Activated CD4-positive, alpha-beta T cell treated with anti-CD3 and anti-CD28 coated beads for 36 hours (primary cell): ENCODE measurements at regions of chr2 and their contacts with region 1.

Region 1: GRCh38 chr2:85728883-85729824 is 24.6 kb upstream of the ATOH8 start:
- DNase-seq: peak; percentile 87
- ATAC-seq: peak; percentile 94
- H3K4me3 Mint-ChIP-seq: no peak overlapping the region
- H3K27ac Mint-ChIP-seq: no peak overlapping the region
- H3K4me1 Mint-ChIP-seq: no peaks in the 10 kb centered on the region
- H3K27me3 Mint-ChIP-seq: peaks cover 7% of the 10 kb centered on the region

Region 2: GRCh38 chr2:85741833-85742455 is 12.8 kb after region 1 on chr2:
- CTCF ChIA-PET with region 1: interaction called, 11 read pairs
- POLR2A ChIA-PET with region 1: no interaction called
- intact Hi-C with region 1: no loop called
- DNase-seq: no peak
- ATAC-seq: no peak
- H3K4me3 Mint-ChIP-seq: no peak overlapping the region
- H3K27ac Mint-ChIP-seq: no peak overlapping the region
- H3K4me1 Mint-ChIP-seq: no peaks in the 10 kb centered on the region
- H3K27me3 Mint-ChIP-seq: peaks cover 26% of the 10 kb centered on the region

Region 3: GRCh38 chr2:85760371-85760770 is 31.2 kb after region 1 on chr2:
- CTCF ChIA-PET with region 1: interaction called, 11 read pairs
- POLR2A ChIA-PET with region 1: no interaction called
- intact Hi-C with region 1: no loop called
- DNase-seq: no peak
- ATAC-seq: no peak
- H3K4me3 Mint-ChIP-seq: no peak overlapping the region
- H3K27ac Mint-ChIP-seq: no peak overlapping the region
- H3K4me1 Mint-ChIP-seq: peaks cover 5% of the 10 kb centered on the region
- H3K27me3 Mint-ChIP-seq: peaks cover 38% of the 10 kb centered on the region

Region 4: GRCh38 chr2:85813982-85814801 is 85.0 kb after region 1 on chr2:
- CTCF ChIA-PET with region 1: interaction called, 51 read pairs
- POLR2A ChIA-PET with region 1: no interaction called
- intact Hi-C with region 1: loop called (anchors 1 kb)
- DNase-seq: peak; percentile 92
- ATAC-seq: peak; percentile 97
- H3K4me3 Mint-ChIP-seq: no peak overlapping the region
- H3K27ac Mint-ChIP-seq: no peak overlapping the region
- H3K4me1 Mint-ChIP-seq: no peaks in the 10 kb centered on the region
- H3K27me3 Mint-ChIP-seq: peaks cover 3% of the 10 kb centered on the region

Region 5: GRCh38 chr2:86079981-86080911 is 351.1 kb after region 1 on chr2:
- CTCF ChIA-PET with region 1: interaction called, 5 read pairs
- POLR2A ChIA-PET with region 1: no interaction called
- intact Hi-C with region 1: loop called (anchors 5 to 10 kb)
- DNase-seq: peak; percentile 91
- ATAC-seq: peak; percentile 88
- H3K4me3 Mint-ChIP-seq: no peak overlapping the region
- H3K27ac Mint-ChIP-seq: peak overlapping the region; percentile 35
- H3K4me1 Mint-ChIP-seq: peaks cover 17% of the 10 kb centered on the region
- H3K27me3 Mint-ChIP-seq: no peaks in the 10 kb centered on the region